ENCODE measurements at regions of chr17 and their contacts with region 1.

Region 1: GRCh38 chr17:7572588-7573323 is 6.7 kb upstream of the CD68 start:
- DNase-seq: peak; percentile 99 to 100 (median 100)
- ATAC-seq: peak; percentile 91
- H3K4me3 ChIP-seq: peak overlapping the region; percentile 91
- H3K4me3 Mint-ChIP-seq: peak overlapping the region; percentile 90 to 100 (median 98)
- H3K27ac ChIP-seq: peak overlapping the region; percentile 96
- H3K27ac Mint-ChIP-seq: peak overlapping the region; percentile 94 to 99 (median 98)
- H3K4me1 ChIP-seq: peaks cover 21 to 31% of the 10 kb centered on the region in 2 donors
- H3K4me1 Mint-ChIP-seq: peaks cover 9 to 62% (median 48%) of the 10 kb centered on the region in 7 donors
- H3K27me3 ChIP-seq: no peaks in the 10 kb centered on the region
- H3K27me3 Mint-ChIP-seq: peaks cover 0 to 5% (median 0%) of the 10 kb centered on the region in 5 donors

Region 2: GRCh38 chr17:7014261-7014994 is 558.3 kb before region 1 on chr17:
- CTCF ChIA-PET with region 1: no interaction called
- POLR2A ChIA-PET with region 1: no interaction called
- intact Hi-C with region 1: loop called in 1 of 2 experiments (anchors 2 kb)
- DNase-seq: peak; percentile 96 to 98 (median 97)
- ATAC-seq: peak; percentile 89
- H3K4me3 ChIP-seq: peak overlapping the region; percentile 97
- H3K4me3 Mint-ChIP-seq: peak overlapping the region; percentile 85 to 99 (median 97)
- H3K27ac ChIP-seq: peak overlapping the region; percentile 99
- H3K27ac Mint-ChIP-seq: peak overlapping the region; percentile 97 to 100 (median 100)
- H3K4me1 ChIP-seq: peaks cover 31 to 52% of the 10 kb centered on the region in 2 donors
- H3K4me1 Mint-ChIP-seq: peaks cover 30 to 81% (median 63%) of the 10 kb centered on the region in 7 donors
- H3K27me3 ChIP-seq: no peaks in the 10 kb centered on the region
- H3K27me3 Mint-ChIP-seq: no peaks in the 10 kb centered on the region

Region 3: DNA sequence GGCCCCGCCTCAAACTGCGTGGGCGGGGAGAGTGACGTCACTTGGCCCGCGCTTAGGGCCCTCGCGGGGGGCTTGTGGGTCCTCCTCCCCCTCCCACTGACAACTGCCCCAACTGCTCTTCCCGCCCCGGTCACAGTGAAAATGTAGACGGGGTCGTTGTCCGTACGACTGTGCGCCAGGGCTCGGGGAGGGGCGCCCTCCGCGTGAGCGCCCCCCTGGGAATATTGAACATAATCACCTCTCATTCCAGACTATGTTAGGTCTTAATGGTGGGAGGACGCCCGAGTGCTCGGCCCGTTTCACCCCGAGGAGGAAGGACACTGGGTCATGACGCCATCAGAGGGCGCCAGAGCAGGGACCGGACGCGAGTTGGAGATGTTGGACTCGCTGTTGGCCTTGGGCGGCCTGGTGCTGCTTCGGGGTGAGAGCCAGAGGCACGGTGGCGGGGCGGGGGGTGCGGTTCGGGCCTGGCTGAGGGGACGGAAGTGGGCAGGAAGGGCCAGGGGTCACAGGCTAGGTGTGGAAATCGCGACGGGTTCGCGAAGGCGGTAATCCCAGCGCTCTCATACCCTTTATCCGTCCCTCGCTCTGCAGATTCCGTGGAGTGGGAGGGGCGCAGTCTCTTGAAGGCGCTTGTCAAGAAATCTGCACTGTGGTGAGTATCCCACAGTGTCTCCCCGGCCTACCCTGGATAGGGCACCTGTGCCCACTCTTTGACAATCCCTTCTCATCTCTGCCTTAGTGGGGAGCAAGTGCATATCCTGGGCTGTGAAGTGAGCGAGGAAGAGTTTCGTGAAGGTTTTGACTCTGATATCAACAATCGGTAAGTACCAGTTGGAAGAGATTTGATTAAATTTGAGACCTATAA is 320.3 kb before region 1 on chr17 and contains the start of gene ELP5:
- CTCF ChIA-PET with region 1: no interaction called
- POLR2A ChIA-PET with region 1: interaction called, 3 read pairs
- intact Hi-C with region 1: loop called (anchors 2 kb)
- DNase-seq: peak in 5 of 9 donors; percentile 73 to 90 (median 83)
- ATAC-seq: peak; percentile 69
- H3K4me3 ChIP-seq: peak within 1 kb of the TSS; percentile 91
- H3K4me3 Mint-ChIP-seq: peak within 1 kb of the TSS; percentile 85 to 98 (median 96)
- H3K27ac ChIP-seq: peak within 1 kb of the TSS; percentile 94
- H3K27ac Mint-ChIP-seq: peak within 1 kb of the TSS; percentile 95 to 100 (median 99)
- H3K4me1 ChIP-seq: peaks cover 22 to 32% of the 10 kb centered on the region in 2 donors
- H3K4me1 Mint-ChIP-seq: peaks cover 29 to 51% (median 42%) of the 10 kb centered on the region in 7 donors
- H3K27me3 ChIP-seq: no peaks in the 10 kb centered on the region
- H3K27me3 Mint-ChIP-seq: peaks cover 0 to 4% (median 0%) of the 10 kb centered on the region in 5 donors
- total RNA-seq, gene ELP5: 26.9 to 49.1 (median 32.9) TPM

Region 4: GRCh38 chr17:7403977-7404736 is 168.6 kb before region 1 on chr17 and contains the start of gene TMEM256:
- CTCF ChIA-PET with region 1: no interaction called
- POLR2A ChIA-PET with region 1: interaction called, 3 read pairs
- intact Hi-C with region 1: loop called (anchors 1 to 5 kb)
- DNase-seq: peak; percentile 79 to 96 (median 91)
- ATAC-seq: peak; percentile 93
- H3K4me3 ChIP-seq: peak within 1 kb of the TSS; percentile 95
- H3K4me3 Mint-ChIP-seq: peak within 1 kb of the TSS; percentile 87 to 98 (median 96)
- H3K27ac ChIP-seq: peak within 1 kb of the TSS; percentile 78
- H3K27ac Mint-ChIP-seq: peak within 1 kb of the TSS; percentile 91 to 100 (median 96)
- H3K4me1 ChIP-seq: peaks cover 9 to 10% of the 10 kb centered on the region in 2 donors
- H3K4me1 Mint-ChIP-seq: peaks cover 8 to 25% (median 21%) of the 10 kb centered on the region in 7 donors
- H3K27me3 ChIP-seq: no peaks in the 10 kb centered on the region
- H3K27me3 Mint-ChIP-seq: peaks cover 0 to 23% (median 0%) of the 10 kb centered on the region in 5 donors
- total RNA-seq, gene TMEM256: 31.5 to 58.5 (median 48.2) TPM

Region 5: DNA sequence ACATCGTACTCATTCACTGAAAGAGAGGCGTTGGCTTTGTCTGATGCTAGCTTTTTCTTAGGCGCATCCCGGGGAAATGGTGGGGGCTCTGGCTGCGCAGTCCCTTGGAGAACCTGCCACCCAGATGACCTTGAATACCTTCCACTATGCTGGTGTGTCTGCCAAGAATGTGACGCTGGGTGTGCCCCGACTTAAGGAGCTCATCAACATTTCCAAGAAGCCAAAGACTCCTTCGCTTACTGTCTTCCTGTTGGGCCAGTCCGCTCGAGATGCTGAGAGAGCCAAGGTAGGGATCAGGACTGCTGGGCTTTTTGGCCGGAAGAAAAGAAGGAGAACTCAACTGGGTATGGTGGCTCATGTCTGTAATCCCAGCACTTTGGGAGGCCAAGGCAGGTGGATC is 64.6 kb before region 1 on chr17:
- CTCF ChIA-PET with region 1: no interaction called
- POLR2A ChIA-PET with region 1: no interaction called
- intact Hi-C with region 1: no loop called
- DNase-seq: no peak
- ATAC-seq: no peak
- H3K4me3 ChIP-seq: no peak overlapping the region
- H3K4me3 Mint-ChIP-seq: no peak overlapping the region
- H3K27ac ChIP-seq: no peak overlapping the region
- H3K27ac Mint-ChIP-seq: peak overlapping the region in 2 of 9 donors; percentile 4 to 56
- H3K4me1 ChIP-seq: no peaks in the 10 kb centered on the region
- H3K4me1 Mint-ChIP-seq: peaks cover 0 to 3% (median 0%) of the 10 kb centered on the region in 7 donors
- H3K27me3 ChIP-seq: no peaks in the 10 kb centered on the region
- H3K27me3 Mint-ChIP-seq: no peaks in the 10 kb centered on the region

Region 6: DNA sequence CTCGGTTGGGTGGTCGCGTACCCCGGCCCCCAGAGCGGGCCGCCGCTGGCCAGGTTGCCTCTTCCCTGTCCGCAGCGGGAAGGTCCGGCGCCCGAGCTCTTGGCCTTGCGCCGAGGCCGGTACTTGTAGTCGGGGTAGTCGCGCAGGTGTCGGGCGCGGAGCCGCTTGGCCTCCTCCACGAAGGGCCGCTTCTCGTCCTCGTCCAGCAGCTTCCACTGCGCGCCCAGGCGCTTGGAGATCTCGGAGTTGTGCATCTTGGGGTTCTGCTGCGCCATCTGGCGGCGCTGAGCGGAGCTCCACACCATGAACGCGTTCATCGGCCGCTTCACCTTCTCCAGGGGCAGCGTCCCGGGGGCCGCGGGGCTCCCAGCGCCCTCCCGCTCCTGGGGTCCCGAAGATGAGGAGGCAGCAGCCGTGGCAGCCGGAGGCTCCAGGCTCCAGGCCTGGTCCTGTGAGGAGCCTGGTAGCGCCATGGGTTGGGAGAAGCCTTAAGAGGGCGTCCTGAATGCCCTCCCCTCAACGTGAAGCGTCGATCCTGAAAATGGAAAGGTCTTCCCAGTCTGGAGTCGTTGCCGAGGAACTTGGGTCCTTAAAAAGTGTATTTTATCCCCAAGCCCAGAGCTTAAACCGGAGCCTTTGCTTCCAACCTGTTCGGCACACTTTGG is 16.6 kb after region 1 on chr17:
- CTCF ChIA-PET with region 1: interaction called, 6 read pairs
- POLR2A ChIA-PET with region 1: interaction called, 108 read pairs
- intact Hi-C with region 1: loop called in 1 of 2 experiments (anchors 2 kb)
- DNase-seq: peak; percentile 54 to 72 (median 63)
- ATAC-seq: peak; percentile 87
- H3K4me3 ChIP-seq: no peak overlapping the region
- H3K4me3 Mint-ChIP-seq: no peak overlapping the region
- H3K27ac ChIP-seq: no peak overlapping the region
- H3K27ac Mint-ChIP-seq: peak overlapping the region in 2 of 9 donors; percentile 13 to 38
- H3K4me1 ChIP-seq: peaks cover 8 to 11% of the 10 kb centered on the region in 2 donors
- H3K4me1 Mint-ChIP-seq: peaks cover 9 to 14% (median 13%) of the 10 kb centered on the region in 7 donors
- H3K27me3 ChIP-seq: no peaks in the 10 kb centered on the region
- H3K27me3 Mint-ChIP-seq: no peaks in the 10 kb centered on the region

Region 7: DNA sequence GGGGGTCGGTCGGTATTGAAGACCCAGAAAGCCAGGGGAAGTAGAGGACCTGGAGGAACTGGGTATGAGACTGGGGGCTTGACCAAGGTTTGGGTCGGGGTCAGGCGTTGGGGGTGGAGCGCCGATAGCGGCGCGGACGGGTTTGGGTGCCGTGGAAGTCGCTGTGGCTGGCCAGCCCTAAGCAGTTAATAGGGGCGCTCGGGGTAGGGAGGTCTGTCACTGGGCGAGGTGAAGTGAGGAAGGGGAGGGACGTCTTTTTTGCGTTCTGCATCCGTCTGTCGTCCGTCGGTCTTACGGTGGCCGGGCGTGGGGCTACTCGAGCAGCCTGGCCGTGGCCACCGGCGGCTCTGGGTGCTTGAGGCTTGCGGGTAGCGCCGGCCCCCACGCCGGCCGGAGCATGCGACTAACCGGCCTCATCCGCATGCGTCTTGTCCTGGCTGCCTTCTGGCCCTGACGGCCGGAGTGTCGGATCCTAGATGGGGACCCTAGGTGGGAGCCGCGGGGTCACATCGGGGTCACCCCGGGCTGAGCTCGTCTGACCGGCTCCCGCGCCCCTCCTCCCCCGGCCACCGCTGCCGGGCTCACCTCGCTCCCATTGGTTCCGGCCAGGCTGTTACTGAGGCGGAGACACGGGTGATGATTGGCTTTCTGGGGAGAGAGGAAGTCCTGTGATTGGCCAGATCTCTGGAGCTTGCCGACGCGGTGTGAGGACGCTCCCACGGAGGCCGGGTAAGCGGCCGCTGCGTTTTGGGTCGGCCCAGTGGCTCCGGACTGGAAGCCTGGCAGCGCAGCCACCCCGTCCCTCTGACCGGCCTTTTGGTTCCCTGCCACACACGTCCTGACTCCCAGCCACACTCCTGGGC is 271.8 kb after region 1 on chr17:
- CTCF ChIA-PET with region 1: no interaction called
- POLR2A ChIA-PET with region 1: no interaction called
- intact Hi-C with region 1: loop called (anchors 2 kb)
- DNase-seq: peak; percentile 74 to 87 (median 79)
- ATAC-seq: peak; percentile 42
- H3K4me3 ChIP-seq: peak overlapping the region; percentile 84
- H3K4me3 Mint-ChIP-seq: peak overlapping the region; percentile 85 to 99 (median 94)
- H3K27ac ChIP-seq: peak overlapping the region; percentile 100
- H3K27ac Mint-ChIP-seq: peak overlapping the region; percentile 90 to 100 (median 99)
- H3K4me1 ChIP-seq: peaks cover 11 to 26% of the 10 kb centered on the region in 2 donors
- H3K4me1 Mint-ChIP-seq: peaks cover 19 to 41% (median 29%) of the 10 kb centered on the region in 7 donors
- H3K27me3 ChIP-seq: no peaks in the 10 kb centered on the region
- H3K27me3 Mint-ChIP-seq: peaks cover 0 to 2% (median 0%) of the 10 kb centered on the region in 5 donors

Region 8: GRCh38 chr17:8156246-8156992 is 583.7 kb after region 1 on chr17:
- CTCF ChIA-PET with region 1: no interaction called
- POLR2A ChIA-PET with region 1: no interaction called
- intact Hi-C with region 1: loop called (anchors 5 to 10 kb)
- DNase-seq: peak; percentile 96 to 100 (median 100)
- ATAC-seq: peak; percentile 83
- H3K4me3 ChIP-seq: peak overlapping the region; percentile 93
- H3K4me3 Mint-ChIP-seq: no peak overlapping the region
- H3K27ac ChIP-seq: peak overlapping the region; percentile 97
- H3K27ac Mint-ChIP-seq: no peak overlapping the region
- H3K4me1 ChIP-seq: peaks cover 58 to 75% of the 10 kb centered on the region in 2 donors
- H3K4me1 Mint-ChIP-seq: peaks cover 33 to 73% (median 65%) of the 10 kb centered on the region in 7 donors
- H3K27me3 ChIP-seq: no peaks in the 10 kb centered on the region
- H3K27me3 Mint-ChIP-seq: no peaks in the 10 kb centered on the region

Measured in naive thymus-derived CD4-positive, alpha-beta T cell (primary cell).